GM12878 (cell line): ENCODE measurements at regions of chr3 and their contacts with region 1.

Region 1: DNA sequence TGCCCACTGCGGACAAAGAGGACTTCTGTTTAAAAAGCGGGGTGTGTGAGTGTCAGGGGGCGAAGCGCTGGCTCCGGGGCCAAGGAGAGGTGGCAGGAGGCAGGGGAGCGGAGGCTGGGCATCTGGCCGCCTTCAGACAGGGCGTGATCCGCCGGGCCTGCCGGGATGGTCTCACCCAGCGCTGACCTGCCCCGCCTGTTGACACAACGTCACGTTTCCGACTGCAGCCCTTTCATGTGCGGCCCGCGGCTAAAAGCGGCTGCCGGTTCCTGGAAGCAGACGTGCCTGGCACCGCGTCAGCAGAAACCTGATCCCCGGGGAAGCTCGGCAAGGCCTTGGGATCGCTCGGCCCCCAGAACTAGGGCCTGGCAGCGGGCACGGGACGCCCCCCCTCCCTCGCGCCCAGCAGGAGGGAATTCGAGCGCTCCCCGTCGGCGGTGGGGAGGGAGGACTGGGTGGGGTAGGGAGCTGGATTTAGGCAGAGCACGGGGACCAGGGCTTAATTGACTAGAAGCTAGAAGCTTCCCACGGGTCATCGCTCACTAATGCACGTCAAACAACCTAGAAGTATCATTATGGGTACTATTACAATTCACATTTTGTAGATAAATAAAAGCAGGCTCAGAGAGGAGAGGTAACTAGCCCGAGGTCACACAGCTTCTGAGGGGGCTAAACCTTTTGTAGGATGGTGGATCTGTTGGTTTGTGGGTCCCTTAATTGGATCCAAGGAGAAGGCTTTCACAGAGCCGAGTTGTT is 7.7 kb downstream of the BHLHE40 start:
- DNase-seq: no peak
- ATAC-seq: peak; percentile 69
- H3K4me3 ChIP-seq: peak overlapping the region; percentile 70
- H3K27ac ChIP-seq: peak overlapping the region; percentile 86
- H3K4me1 ChIP-seq: peaks cover 38% of the 10 kb centered on the region
- H3K27me3 ChIP-seq: no peaks in the 10 kb centered on the region
- CTCF ChIP-seq: no peak
- EP300 ChIP-seq: 0 out of 4 replicates have a peak, but pooled peaks of 1 of the 2 experiments have one; percentile 58
- POLR2A ChIP-seq: peak; percentile 92
- RAD21 ChIP-seq: no peak; the same call in 1 of the 2 replicates

Region 2: DNA sequence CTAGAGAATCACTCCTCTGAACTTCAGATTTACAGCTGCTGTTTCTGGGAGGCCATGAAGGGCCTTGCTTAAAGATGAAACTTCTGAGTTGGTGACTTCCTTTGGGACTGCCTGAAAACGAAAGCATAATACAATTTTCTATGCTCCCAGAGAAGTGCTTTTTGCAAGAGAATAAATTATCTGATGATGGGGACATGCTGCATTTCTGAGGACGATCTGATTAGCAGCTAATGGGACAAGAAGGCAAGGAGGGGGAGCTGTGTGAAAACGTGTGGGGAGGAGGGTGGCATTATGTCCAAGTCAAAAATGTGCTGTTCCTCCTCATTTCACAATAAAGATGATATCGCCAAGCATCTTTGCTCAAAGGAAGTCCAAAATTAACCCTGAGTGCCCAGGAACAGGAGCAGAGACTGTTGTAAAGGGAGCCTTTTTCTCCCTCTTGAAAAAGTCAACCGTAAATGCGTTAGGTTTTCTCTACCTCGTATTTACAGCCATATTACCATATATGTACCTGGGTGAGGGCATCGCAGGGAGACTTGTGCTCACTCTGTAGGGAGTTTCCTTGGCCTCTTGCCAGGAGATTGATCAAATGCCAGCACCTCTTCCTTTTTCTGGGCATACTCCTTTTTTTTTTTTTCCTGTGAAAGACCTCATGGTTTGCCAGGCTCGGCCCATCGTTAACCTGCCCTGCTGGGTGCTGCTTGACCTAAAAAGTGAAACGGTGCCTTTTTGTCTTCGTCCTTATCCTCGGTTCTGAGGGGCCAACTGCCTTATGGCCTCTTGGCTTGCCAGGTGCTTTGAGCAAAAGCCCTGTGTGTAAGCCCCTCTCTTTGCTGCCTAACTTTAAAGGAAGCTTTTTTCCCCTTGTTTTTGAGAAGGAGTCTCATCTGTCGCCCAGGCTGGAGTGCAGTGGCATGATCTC is 482.4 kb before region 1 on chr3:
- CTCF ChIA-PET with region 1: no interaction called
- POLR2A ChIA-PET with region 1: no interaction called
- RAD21 ChIA-PET with region 1: no interaction called
- SMC1A ChIA-PET with region 1: no interaction called
- in situ Hi-C with region 1: no loop called
- intact Hi-C with region 1: loop called (anchors 10 kb)
- DNase-seq: no peak
- ATAC-seq: 0 out of 3 replicates have a peak, but pooled peaks have one; percentile 4
- H3K4me3 ChIP-seq: peak overlapping the region; percentile 52
- H3K27ac ChIP-seq: peak overlapping the region; percentile 42
- H3K4me1 ChIP-seq: peaks cover 54% of the 10 kb centered on the region
- H3K27me3 ChIP-seq: no peaks in the 10 kb centered on the region
- CTCF ChIP-seq: no peak
- EP300 ChIP-seq: no peak
- POLR2A ChIP-seq: no peak
- RAD21 ChIP-seq: no peak

Region 3: DNA sequence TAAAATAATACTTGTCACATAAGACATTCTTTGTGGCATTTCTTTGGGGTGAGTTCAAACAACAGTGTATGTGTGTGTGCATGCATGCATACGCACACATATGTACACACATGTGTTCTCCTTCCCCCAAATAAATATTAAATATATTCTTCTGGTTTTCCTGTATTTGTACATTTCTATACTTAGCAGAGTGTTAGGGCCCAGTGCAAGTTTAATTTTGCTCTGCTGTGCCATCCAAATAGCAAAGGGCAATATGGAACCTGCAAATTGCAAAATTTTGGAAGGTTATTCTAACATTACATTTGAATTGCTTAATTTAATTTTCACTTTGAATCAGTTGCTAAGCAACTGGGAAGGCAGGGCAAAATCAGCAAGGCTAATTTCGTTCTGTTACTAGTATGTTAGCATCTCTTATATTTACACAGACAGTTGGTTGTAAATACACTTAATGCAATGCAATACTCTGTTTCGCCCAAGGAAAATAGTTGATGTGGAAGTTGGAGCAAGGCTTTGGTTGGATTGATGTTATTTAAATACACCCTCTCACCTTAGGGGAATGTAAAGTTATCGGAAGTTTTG is 363.4 kb before region 1 on chr3:
- CTCF ChIA-PET with region 1: no interaction called
- POLR2A ChIA-PET with region 1: no interaction called
- RAD21 ChIA-PET with region 1: no interaction called
- SMC1A ChIA-PET with region 1: no interaction called
- in situ Hi-C with region 1: no loop called
- intact Hi-C with region 1: no loop called
- DNase-seq: no peak
- ATAC-seq: no peak
- H3K4me3 ChIP-seq: no peak overlapping the region
- H3K27ac ChIP-seq: no peak overlapping the region
- H3K4me1 ChIP-seq: no peaks in the 10 kb centered on the region
- H3K27me3 ChIP-seq: no peaks in the 10 kb centered on the region
- CTCF ChIP-seq: no peak
- EP300 ChIP-seq: no peak
- POLR2A ChIP-seq: no peak
- RAD21 ChIP-seq: no peak

Region 4: DNA sequence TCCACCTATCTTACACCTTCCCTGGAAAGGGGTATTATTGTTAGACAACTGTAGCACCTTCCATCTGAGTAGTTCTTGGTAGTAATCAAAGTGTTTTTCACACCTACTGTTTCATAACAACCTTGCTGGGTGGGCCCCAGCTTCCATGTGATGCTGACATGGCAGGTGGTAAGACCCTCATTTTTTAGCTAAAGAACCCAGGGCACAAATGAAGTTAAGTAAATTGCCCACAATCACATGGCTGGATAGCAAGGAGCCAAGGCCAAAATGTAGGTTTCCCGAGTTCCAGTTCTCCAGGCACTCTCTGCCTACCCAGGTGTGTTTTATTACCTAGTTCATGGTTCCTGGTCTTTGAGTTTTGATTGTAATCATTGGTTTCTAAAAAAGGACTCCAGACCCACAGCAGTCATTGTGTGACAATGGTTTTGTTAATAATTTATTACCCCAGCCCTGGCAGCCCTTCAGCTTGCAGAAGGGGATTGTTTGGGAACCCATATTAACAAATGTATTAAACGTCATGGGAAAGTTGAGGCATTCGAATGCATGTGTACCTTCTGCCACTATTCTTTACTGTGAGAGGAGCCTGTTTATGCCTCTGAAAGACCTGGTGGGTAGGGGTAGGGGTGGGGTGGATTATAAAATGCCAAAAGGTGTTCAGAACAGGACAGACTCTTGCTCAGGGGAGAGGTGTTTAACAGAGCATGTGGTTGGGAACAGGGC is 229.9 kb before region 1 on chr3:
- CTCF ChIA-PET with region 1: interaction called, 7 read pairs
- POLR2A ChIA-PET with region 1: interaction called, 230 read pairs
- RAD21 ChIA-PET with region 1: interaction called, 342 read pairs
- SMC1A ChIA-PET with region 1: interaction called, 16 read pairs
- in situ Hi-C with region 1: loop called (anchors 5 kb)
- intact Hi-C with region 1: no loop called
- DNase-seq: no peak
- ATAC-seq: peak; percentile 12
- H3K4me3 ChIP-seq: no peak overlapping the region
- H3K27ac ChIP-seq: peak overlapping the region; percentile 33
- H3K4me1 ChIP-seq: peaks cover 55% of the 10 kb centered on the region
- H3K27me3 ChIP-seq: no peaks in the 10 kb centered on the region
- CTCF ChIP-seq: no peak
- EP300 ChIP-seq: peak in 1 of 2 experiments; percentile 37; a peak in 2 of 4 replicates
- POLR2A ChIP-seq: no peak
- RAD21 ChIP-seq: no peak

Region 5: DNA sequence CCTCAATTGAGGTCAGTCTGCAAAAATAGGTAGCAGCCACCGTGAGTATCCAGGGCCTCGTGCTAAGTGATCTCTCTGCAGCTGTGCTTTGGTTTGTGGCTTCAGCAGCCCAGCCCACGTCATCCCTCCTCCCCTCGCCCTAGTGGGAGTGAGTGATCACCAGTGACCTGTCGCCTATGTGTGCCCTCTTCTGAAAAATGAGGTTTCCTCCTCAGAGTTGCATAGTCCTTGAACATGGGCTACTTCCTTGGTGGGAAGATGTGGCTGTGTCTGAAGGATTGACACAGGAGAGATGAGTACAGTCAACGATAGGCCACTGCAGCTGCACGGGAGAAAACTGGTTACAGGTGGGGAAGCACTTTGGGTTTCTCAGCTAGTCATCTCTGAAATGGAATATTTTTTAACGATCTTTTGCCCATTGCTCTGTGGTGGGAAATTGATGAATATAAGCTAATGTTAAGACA is 152.5 kb before region 1 on chr3:
- CTCF ChIA-PET with region 1: no interaction called
- POLR2A ChIA-PET with region 1: interaction called, 3 read pairs
- RAD21 ChIA-PET with region 1: interaction called, 325 read pairs
- SMC1A ChIA-PET with region 1: interaction called, 129 read pairs
- in situ Hi-C with region 1: no loop called
- intact Hi-C with region 1: no loop called
- DNase-seq: no peak
- ATAC-seq: peak; percentile 63
- H3K4me3 ChIP-seq: no peak overlapping the region
- H3K27ac ChIP-seq: peak overlapping the region; percentile 43; the same call in 1 of the 2 replicates
- H3K4me1 ChIP-seq: peaks cover 43% of the 10 kb centered on the region
- H3K27me3 ChIP-seq: no peaks in the 10 kb centered on the region
- CTCF ChIP-seq: no peak
- EP300 ChIP-seq: peak; percentile 89 to 95; a peak in 3 of 4 replicates
- POLR2A ChIP-seq: no peak
- RAD21 ChIP-seq: 0 out of 2 replicates have a peak, but pooled peaks have one; percentile 4

Region 6: GRCh38 chr3:5006755-5007202 is 19.8 kb after region 1 on chr3:
- CTCF ChIA-PET with region 1: interaction called, 330 read pairs
- POLR2A ChIA-PET with region 1: interaction called, 111 read pairs
- RAD21 ChIA-PET with region 1: interaction called, 421 read pairs
- SMC1A ChIA-PET with region 1: interaction called, 186 read pairs
- in situ Hi-C with region 1: no loop called
- intact Hi-C with region 1: loop called (anchors 1 kb)
- DNase-seq: peak; percentile 95
- ATAC-seq: peak; percentile 78
- H3K4me3 ChIP-seq: 0 out of 2 replicates have a peak overlapping the region, but pooled peaks have one; percentile 26
- H3K27ac ChIP-seq: peak overlapping the region; percentile 94
- H3K4me1 ChIP-seq: peaks cover 53% of the 10 kb centered on the region
- H3K27me3 ChIP-seq: no peaks in the 10 kb centered on the region
- CTCF ChIP-seq: peak in 1 of 3 experiments; percentile 24; a peak in 2 of 6 replicates
- EP300 ChIP-seq: peak; percentile 98 to 99
- POLR2A ChIP-seq: peak; percentile 69; the same call in 1 of the 2 replicates
- RAD21 ChIP-seq: peak; percentile 30; the same call in 1 of the 2 replicates

Region 7: DNA sequence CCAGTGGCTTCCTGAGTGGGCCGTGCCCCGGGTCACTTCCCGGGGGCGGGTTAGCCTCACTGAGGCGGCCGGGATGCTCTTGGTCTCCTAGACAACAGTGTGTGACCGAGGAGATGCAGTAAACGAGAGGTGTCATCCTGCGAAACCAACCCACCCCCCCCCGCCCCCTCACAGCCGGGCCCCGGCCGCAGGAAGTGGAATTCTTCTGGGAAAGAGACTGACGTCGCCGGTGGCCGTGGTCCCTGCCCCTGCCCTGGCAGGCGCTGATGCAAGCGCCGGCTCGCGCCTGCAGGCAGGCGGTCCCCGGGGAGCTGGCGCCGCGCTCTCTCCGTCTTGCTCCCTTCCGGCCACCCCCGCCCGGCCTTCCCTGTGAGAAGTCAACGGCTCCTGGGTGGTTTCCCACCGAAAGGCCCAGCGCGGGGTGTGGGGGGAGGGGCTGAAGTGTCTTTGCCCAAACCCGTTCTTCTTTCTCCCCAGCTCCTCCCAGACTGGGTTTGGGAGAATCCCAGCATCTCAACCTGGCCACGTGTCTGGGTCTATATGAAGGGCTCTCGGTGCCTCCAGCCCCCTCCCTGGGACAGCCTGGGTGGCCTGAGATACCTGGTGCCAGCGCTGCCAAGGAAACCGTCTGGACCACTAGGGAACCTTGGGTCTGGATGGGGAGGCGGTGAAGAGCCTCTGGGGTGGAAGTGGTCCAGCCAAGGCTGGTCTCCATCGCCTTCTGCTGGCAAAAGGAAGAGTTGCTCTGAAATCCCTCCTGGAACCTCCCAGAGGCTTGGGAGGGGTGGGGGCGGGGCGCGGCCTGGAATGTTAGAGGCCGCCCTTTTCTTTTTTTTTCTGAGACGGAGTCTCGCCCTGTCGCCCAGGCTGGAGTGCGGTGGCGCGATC is 39.6 kb after region 1 on chr3:
- CTCF ChIA-PET with region 1: interaction called, 21 read pairs
- POLR2A ChIA-PET with region 1: interaction called, 94 read pairs
- RAD21 ChIA-PET with region 1: interaction called, 194 read pairs
- SMC1A ChIA-PET with region 1: interaction called, 163 read pairs
- in situ Hi-C with region 1: no loop called
- intact Hi-C with region 1: loop called (anchors 1 kb)
- DNase-seq: no peak
- ATAC-seq: peak; percentile 83
- H3K4me3 ChIP-seq: peak overlapping the region; percentile 61; the same call in 1 of the 2 replicates
- H3K27ac ChIP-seq: peak overlapping the region; percentile 68
- H3K4me1 ChIP-seq: peaks cover 31% of the 10 kb centered on the region
- H3K27me3 ChIP-seq: no peaks in the 10 kb centered on the region
- CTCF ChIP-seq: peak; percentile 63 to 72 (median 71)
- EP300 ChIP-seq: no peak; a peak in 1 of 4 replicates
- POLR2A ChIP-seq: 0 out of 2 replicates have a peak, but pooled peaks have one; percentile 31
- RAD21 ChIP-seq: peak; percentile 86

Region 8: GRCh38 chr3:5057857-5058324 is 70.9 kb after region 1 on chr3:
- CTCF ChIA-PET with region 1: interaction called, 28 read pairs
- POLR2A ChIA-PET with region 1: interaction called, 20 read pairs
- RAD21 ChIA-PET with region 1: interaction called, 231 read pairs
- SMC1A ChIA-PET with region 1: interaction called, 165 read pairs
- in situ Hi-C with region 1: no loop called
- intact Hi-C with region 1: loop called (anchors 1 kb)
- DNase-seq: peak; percentile 75
- ATAC-seq: peak; percentile 93
- H3K4me3 ChIP-seq: no peak overlapping the region
- H3K27ac ChIP-seq: no peak overlapping the region
- H3K4me1 ChIP-seq: peaks cover 34% of the 10 kb centered on the region
- H3K27me3 ChIP-seq: no peaks in the 10 kb centered on the region; a peak in 1 of 4 replicates
- CTCF ChIP-seq: peak; percentile 70 to 87 (median 76)
- EP300 ChIP-seq: no peak
- POLR2A ChIP-seq: no peak
- RAD21 ChIP-seq: peak; percentile 99